ENCODE measurements at regions of chr17 and their contacts with region 1.

Region 1: GRCh38 chr17:49496183-49496866 is 1.2 kb downstream of the NGFR start:
- DNase-seq: peak; percentile 76 to 90 (median 82)
- ATAC-seq: peak; percentile 63 to 88 (median 79)
- H3K4me3 ChIP-seq: peak overlapping the region; percentile 29 to 76 (median 56)
- H3K27ac ChIP-seq: peak overlapping the region in 3 of 12 donors; percentile 5 to 32 (median 22)
- H3K4me1 ChIP-seq: peaks cover 0 to 38% (median 25%) of the 10 kb centered on the region in 12 donors
- H3K27me3 ChIP-seq: peaks cover 17 to 70% (median 49%) of the 10 kb centered on the region in 9 donors
- CTCF ChIP-seq: peak; percentile 68 to 94 (median 88)
- POLR2A ChIP-seq: no peak

Region 2: DNA sequence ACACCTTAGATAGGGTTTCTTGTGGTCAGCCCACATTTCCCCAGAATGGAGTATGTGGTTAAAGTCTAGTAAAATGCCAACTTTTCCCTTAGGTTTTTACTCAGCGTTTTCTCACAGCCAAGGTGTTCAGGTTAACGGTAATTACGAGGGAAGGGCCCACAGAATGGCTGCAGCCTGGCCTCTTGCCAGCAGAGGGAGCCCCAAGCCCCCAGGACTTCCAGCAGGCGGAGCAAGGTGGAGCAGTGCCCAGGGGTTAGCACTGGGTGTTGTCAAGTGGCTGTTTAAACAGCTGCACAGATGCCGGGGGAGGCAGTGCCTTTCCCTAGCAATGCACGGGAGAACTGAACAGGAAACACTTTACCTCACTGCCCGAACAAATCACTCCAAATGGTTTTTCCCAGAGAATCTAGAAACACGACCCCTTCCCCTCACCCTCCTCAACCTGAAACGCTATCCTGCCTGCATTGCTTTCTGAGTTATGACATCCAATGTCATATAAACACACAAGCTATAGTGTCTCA is 88.3 kb before region 1 on chr17:
- intact Hi-C with region 1: loop called in 1 of 10 experiments (anchors 2 kb)
- DNase-seq: peak; percentile 55 to 82 (median 67)
- ATAC-seq: peak in 3 of 4 donors; percentile 71 to 80 (median 77)
- H3K4me3 ChIP-seq: no peak overlapping the region
- H3K27ac ChIP-seq: peak overlapping the region in 1 of 12 donors; percentile 8
- H3K4me1 ChIP-seq: peaks cover 0 to 11% (median 0%) of the 10 kb centered on the region in 12 donors
- H3K27me3 ChIP-seq: no peaks in the 10 kb centered on the region
- CTCF ChIP-seq: peak; percentile 46 to 74 (median 62)
- POLR2A ChIP-seq: no peak

Region 3: GRCh38 chr17:49434821-49435670 is 61.3 kb before region 1 on chr17:
- intact Hi-C with region 1: loop called in 2 of 10 experiments (anchors 5 to 10 kb)
- DNase-seq: peak in 1 of 5 donors; percentile 19
- ATAC-seq: peak; percentile 53 to 76 (median 66)
- H3K4me3 ChIP-seq: no peak overlapping the region
- H3K27ac ChIP-seq: no peak overlapping the region
- H3K4me1 ChIP-seq: no peaks in the 10 kb centered on the region
- H3K27me3 ChIP-seq: peaks cover 2 to 30% (median 19%) of the 10 kb centered on the region in 9 donors
- CTCF ChIP-seq: peak; percentile 53 to 80 (median 73)
- POLR2A ChIP-seq: no peak

Region 4: GRCh38 chr17:49472527-49472926 is 23.8 kb before region 1 on chr17:
- intact Hi-C with region 1: loop called in 1 of 10 experiments (anchors 2 kb)
- DNase-seq: peak in 3 of 5 donors; percentile 32 to 51 (median 38)
- ATAC-seq: peak in 2 of 4 donors; percentile 13 to 48
- H3K4me3 ChIP-seq: no peak overlapping the region
- H3K27ac ChIP-seq: no peak overlapping the region
- H3K4me1 ChIP-seq: peaks cover 0 to 34% (median 17%) of the 10 kb centered on the region in 12 donors
- H3K27me3 ChIP-seq: peaks cover 0 to 49% (median 13%) of the 10 kb centered on the region in 9 donors
- CTCF ChIP-seq: no peak
- POLR2A ChIP-seq: no peak

Measured in heart left ventricle (tissue), 16 donors.